IMR-90 (cell line): ENCODE measurements at regions of chr10 and their contacts with region 1.

Region 1: GRCh38 chr10:110209454-110209925 is 2.1 kb downstream of the MXI1 start:
- DNase-seq: peak; percentile 65
- ATAC-seq: peak; percentile 11
- H3K4me3 ChIP-seq: peak overlapping the region; percentile 54
- H3K27ac ChIP-seq: peak overlapping the region; percentile 65
- H3K4me1 ChIP-seq: peaks cover 6% of the 10 kb centered on the region; the same call in 1 of the 2 replicates
- H3K27me3 ChIP-seq: no peaks in the 10 kb centered on the region
- CTCF ChIP-seq: no peak
- POLR2A ChIP-seq: no peak; the same call in 1 of the 2 replicates
- RAD21 ChIP-seq: no peak

Region 2: GRCh38 chr10:109902934-109903589 is 306.4 kb before region 1 on chr10:
- CTCF ChIA-PET with region 1: no interaction called
- POLR2A ChIA-PET with region 1: interaction called, 11 read pairs
- dilution Hi-C with region 1: no loop called
- in situ Hi-C with region 1: no loop called
- intact Hi-C with region 1: no loop called
- DNase-seq: peak; percentile 38
- ATAC-seq: peak; percentile 65
- H3K4me3 ChIP-seq: no peak overlapping the region
- H3K27ac ChIP-seq: peak overlapping the region; percentile 68
- H3K4me1 ChIP-seq: peaks cover 32% of the 10 kb centered on the region
- H3K27me3 ChIP-seq: no peaks in the 10 kb centered on the region
- CTCF ChIP-seq: no peak
- POLR2A ChIP-seq: no peak
- RAD21 ChIP-seq: no peak

Region 3: DNA sequence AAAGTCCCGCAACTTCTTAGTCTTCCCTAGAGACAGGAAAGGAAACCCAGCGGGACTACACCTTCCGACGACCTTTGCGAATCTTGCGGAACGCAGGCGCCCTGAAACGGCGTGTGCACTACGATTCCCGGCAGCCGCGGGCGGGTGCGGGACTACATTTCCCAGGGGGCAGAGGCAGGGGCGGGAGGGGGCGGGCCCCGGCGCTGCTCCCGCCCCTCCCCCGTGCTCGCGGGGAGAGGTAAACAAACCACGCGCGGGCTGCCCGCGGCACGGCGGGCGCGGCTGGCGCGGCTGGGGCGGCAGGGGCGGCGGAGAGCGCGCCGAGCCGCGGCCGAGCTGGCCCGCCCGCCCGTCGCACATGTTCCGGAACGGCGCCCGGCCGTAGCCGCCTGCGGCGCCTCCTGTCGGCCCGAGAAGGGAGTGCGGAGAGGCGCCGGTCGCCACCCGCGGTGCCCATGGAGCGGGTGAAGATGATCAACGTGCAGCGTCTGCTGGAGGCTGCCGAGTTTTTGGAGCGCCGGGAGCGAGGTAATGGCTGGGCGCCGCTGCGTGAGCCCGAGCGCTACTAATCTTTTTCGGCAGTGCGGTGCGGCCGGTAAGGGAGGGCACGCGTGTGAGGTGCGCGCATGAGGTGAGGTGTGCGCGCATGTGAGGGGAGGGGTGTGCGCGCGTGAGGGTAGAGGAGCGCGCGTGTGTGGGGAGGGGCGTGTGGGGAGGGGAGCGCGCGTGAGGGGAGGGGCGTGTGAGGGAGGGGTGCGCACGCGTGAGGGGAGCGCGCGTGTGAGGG is 16.5 kb after region 1 on chr10:
- CTCF ChIA-PET with region 1: interaction called, 6 read pairs
- POLR2A ChIA-PET with region 1: no interaction called
- dilution Hi-C with region 1: no loop called
- in situ Hi-C with region 1: no loop called
- intact Hi-C with region 1: loop called (anchors 1 kb)
- DNase-seq: peak; percentile 93
- ATAC-seq: peak; percentile 81
- H3K4me3 ChIP-seq: peak overlapping the region; percentile 90
- H3K27ac ChIP-seq: peak overlapping the region; percentile 96
- H3K4me1 ChIP-seq: peaks cover 6% of the 10 kb centered on the region
- H3K27me3 ChIP-seq: no peaks in the 10 kb centered on the region
- CTCF ChIP-seq: peak; percentile 72
- POLR2A ChIP-seq: no peak
- RAD21 ChIP-seq: peak; percentile 64

Region 4: DNA sequence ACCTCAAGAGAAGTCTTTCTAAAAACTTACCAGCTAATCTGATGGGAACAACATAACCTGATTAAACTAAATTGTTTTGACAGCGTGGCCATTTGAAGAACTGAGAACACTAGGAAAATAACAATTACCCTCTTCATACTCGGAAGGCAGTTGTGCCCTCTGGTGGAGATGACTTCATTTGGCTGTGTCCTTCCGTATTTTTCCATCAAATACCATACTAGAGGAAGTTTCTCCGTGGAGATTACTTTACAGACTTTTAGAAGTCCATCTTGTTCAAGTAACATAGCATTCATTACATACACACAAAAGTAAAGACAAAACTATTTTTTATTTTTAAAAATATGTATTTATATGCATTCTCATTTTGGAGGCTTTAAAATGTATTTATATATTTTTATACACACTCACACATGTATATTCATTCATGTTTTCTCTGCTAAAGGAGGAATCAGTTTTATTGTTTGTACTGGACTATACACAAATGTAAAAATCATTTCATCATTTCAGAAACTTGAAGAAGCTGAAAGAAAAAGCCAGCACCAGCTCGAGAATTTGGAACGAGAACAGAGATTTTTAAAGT is 70.0 kb after region 1 on chr10:
- CTCF ChIA-PET with region 1: interaction called, 4 read pairs
- POLR2A ChIA-PET with region 1: no interaction called
- dilution Hi-C with region 1: no loop called
- in situ Hi-C with region 1: no loop called
- intact Hi-C with region 1: loop called (anchors 1 kb)
- DNase-seq: peak; percentile 71
- ATAC-seq: peak; percentile 94
- H3K4me3 ChIP-seq: no peak overlapping the region
- H3K27ac ChIP-seq: no peak overlapping the region
- H3K4me1 ChIP-seq: peaks cover 1% of the 10 kb centered on the region; the same call in 1 of the 2 replicates
- H3K27me3 ChIP-seq: no peaks in the 10 kb centered on the region
- CTCF ChIP-seq: peak; percentile 84
- POLR2A ChIP-seq: no peak
- RAD21 ChIP-seq: peak; percentile 92

Region 5: GRCh38 chr10:110368002-110368401 is 158.5 kb after region 1 on chr10:
- CTCF ChIA-PET with region 1: no interaction called
- POLR2A ChIA-PET with region 1: no interaction called
- dilution Hi-C with region 1: no loop called
- in situ Hi-C with region 1: no loop called
- intact Hi-C with region 1: no loop called
- DNase-seq: peak; percentile 61
- ATAC-seq: peak; percentile 94
- H3K4me3 ChIP-seq: no peak overlapping the region
- H3K27ac ChIP-seq: no peak overlapping the region
- H3K4me1 ChIP-seq: 0 out of 2 replicates have a peak, but pooled peaks cover 2% of the 10 kb centered on the region
- H3K27me3 ChIP-seq: no peaks in the 10 kb centered on the region
- CTCF ChIP-seq: no peak
- POLR2A ChIP-seq: no peak
- RAD21 ChIP-seq: no peak